Spleen (tissue), 13 donors: ENCODE measurements at regions of chr2 and their contacts with region 1.

Region 1: DNA sequence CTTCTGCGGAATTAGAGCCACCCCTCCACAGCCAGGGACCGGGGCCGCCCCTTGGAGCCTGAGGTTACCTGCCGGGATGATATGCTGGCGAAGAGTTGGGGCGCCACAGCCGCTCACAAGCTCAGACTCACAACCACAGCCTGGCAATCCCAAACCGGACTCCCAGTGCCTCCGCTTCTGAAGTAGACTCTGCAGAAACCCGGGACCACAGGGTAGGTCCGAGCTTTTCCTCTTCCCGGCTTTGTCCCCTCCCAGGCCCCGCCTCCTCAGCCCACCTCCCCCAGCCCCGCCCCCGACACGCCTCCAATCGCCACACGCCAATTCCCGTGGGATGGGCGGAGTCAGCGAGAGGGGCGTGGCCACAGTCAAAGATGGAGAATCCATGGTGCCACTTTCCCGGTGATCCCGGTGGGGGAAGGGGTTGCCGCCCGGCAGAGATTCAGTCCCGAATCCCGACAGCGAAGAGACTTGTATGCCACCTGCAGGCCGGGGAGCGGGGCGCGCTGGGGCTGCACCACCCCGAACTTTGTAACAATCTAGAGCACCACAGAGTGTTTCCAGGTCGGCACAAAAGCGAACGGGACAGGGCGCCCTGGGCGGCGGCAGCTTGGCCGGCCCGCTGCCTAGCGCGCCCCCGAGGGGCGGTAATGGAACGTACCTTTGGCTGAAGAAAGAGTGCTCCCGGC is at the start of gene IDH1:
- DNase-seq: peak; percentile 96
- H3K4me3 ChIP-seq: peak within 1 kb of the TSS; percentile 91 to 100 (median 98)
- H3K27ac ChIP-seq: peak within 1 kb of the TSS; percentile 64 to 89 (median 84)
- H3K4me1 ChIP-seq: peaks cover 20 to 58% (median 45%) of the 10 kb centered on the region in 6 donors
- H3K27me3 ChIP-seq: no peaks in the 10 kb centered on the region
- CTCF ChIP-seq: peak in 8 of 11 experiments; percentile 11 to 57 (median 46)
- POLR2A ChIP-seq: no peak
- total RNA-seq, gene IDH1: 49.9 to 101 (median 88.3) TPM

Region 2: DNA sequence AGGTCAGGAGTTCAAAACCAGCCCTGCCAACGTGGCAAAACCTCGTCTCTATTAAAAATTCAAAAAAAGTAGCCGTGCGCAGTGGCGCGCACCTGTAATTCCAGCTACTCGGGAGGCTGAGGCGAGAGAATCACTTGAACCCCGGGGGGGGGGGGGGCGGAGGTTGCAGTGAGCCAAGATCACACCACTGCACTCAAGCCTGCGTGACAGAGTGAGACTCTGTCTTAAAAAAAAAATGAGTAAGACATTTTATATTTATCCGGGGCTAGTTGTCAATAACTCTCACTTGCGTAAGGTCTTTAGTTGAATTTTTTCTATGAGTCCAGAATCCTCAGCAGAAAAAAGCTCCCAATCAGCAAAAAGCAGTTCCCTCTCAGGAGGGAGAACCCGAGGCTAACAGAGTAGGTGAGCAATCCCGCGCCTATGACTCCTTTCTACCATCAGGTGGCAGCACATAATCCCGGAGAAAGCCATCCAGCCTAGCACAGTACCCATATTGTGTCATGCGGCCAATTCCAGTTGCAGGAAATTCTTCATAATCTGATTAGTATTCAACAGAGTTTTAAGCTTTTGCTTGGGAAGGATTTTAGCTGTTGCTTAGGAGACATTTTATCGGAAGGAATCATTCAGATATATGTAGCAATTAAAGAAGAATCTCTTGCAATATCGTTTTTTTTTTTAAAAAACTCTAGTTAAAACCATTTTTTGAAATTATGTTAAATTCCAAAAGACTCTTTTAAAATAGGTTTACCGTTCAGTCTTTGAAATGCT is 79.8 kb before region 1 on chr2:
- intact Hi-C with region 1: loop called (anchors 5 kb)
- DNase-seq: peak; percentile 77
- H3K4me3 ChIP-seq: no peak overlapping the region
- H3K27ac ChIP-seq: peak overlapping the region in 2 of 8 donors; percentile 19 to 26
- H3K4me1 ChIP-seq: peaks cover 0 to 22% (median 5%) of the 10 kb centered on the region in 6 donors
- H3K27me3 ChIP-seq: no peaks in the 10 kb centered on the region
- CTCF ChIP-seq: peak; percentile 46 to 93 (median 82)
- POLR2A ChIP-seq: no peak